PC-9 (cell line): ENCODE measurements at regions of chr14 and their contacts with region 1.

Region 1: DNA sequence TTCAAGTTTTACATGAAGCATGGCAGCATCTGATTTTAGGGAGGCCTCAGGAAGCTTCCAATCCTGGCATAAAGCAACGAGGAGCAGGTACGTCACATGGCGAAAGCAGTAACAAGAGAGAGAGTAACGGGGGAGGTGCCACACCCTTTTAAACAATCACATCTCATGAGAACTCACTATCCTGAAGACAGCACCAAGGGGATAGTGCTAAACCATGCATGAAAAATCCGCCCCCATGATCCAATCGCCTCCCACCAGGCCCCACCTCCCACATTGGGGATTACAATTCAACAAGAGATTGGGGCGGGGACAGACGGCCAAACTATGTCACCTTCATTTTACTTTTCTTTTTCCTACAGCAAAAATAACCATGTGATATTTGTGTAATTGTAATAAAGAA is 7.2 kb upstream of the MAP3K9 start:
- DNase-seq: no peak
- H3K4me3 ChIP-seq: no peak overlapping the region
- H3K27ac ChIP-seq: no peak overlapping the region
- H3K4me1 ChIP-seq: peaks cover 18% of the 10 kb centered on the region
- H3K27me3 ChIP-seq: peaks cover 12% of the 10 kb centered on the region; the same call in 1 of the 2 replicates
- CTCF ChIP-seq: no peak

Region 2: GRCh38 chr14:70045844-70046535 is 770.5 kb before region 1 on chr14:
- CTCF ChIA-PET with region 1: no interaction called
- POLR2A ChIA-PET with region 1: no interaction called
- intact Hi-C with region 1: loop called (anchors 2 kb)
- DNase-seq: peak in 1 of 2 experiments; percentile 54
- H3K4me3 ChIP-seq: no peak overlapping the region
- H3K27ac ChIP-seq: no peak overlapping the region
- H3K4me1 ChIP-seq: no peaks in the 10 kb centered on the region
- H3K27me3 ChIP-seq: peaks cover 74% of the 10 kb centered on the region
- CTCF ChIP-seq: peak; percentile 72

Region 3: DNA sequence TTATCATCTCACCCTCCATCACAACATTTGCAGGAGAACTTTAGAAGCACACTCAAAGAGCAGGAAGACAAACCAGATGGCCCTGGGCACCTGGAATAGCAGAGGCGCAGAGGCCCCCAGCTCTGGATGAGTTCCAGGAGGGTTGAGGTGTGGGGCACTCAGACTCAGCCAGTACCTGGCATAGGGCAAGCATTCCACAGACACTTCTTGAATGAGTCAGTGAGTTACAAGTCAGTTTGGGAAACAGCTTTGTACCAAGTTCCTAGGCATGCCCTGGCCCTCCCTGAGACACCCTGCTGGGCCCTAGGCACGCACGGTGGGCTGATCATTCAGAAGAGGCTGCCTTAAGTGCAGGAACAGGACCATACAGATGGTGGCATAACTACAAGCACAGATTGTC is 61.5 kb before region 1 on chr14:
- CTCF ChIA-PET with region 1: interaction called, 3 read pairs
- POLR2A ChIA-PET with region 1: no interaction called
- intact Hi-C with region 1: loop called (anchors 2 kb)
- DNase-seq: peak; percentile 96 to 99
- H3K4me3 ChIP-seq: no peak overlapping the region
- H3K27ac ChIP-seq: peak overlapping the region; percentile 87
- H3K4me1 ChIP-seq: peaks cover 36% of the 10 kb centered on the region
- H3K27me3 ChIP-seq: no peaks in the 10 kb centered on the region
- CTCF ChIP-seq: no peak